Right ventricle myocardium inferior (tissue), 1 donor: ENCODE measurements at regions of chr21 and their contacts with region 1.

Region 1: GRCh38 chr21:45140346-45140940 is 66.1 kb downstream of the ADARB1 start:
- DNase-seq: no peak
- ATAC-seq: peak; percentile 89

Region 2: DNA sequence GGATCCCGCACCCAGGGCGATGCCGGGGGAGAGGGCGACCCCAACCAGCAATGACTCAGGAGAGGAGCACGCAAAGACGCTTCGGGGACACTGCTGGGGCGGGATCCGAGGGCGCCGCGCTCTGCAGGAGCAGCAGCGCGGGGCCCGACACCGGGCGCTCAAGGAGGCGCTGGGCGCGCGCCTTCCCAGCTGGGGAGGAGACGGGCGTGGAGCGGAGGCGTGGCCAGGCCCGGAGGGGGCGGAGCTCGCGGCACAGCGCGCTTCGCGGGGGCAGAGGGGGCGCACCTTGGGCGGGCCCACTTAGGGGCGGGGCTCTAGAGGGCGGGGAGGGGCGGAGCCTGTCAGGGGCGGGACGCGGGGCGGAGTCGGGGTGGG is 322.9 kb before region 1 on chr21:
- intact Hi-C with region 1: loop called (anchors 10 kb)
- DNase-seq: peak; percentile 95
- ATAC-seq: peak; percentile 96

Region 3: DNA sequence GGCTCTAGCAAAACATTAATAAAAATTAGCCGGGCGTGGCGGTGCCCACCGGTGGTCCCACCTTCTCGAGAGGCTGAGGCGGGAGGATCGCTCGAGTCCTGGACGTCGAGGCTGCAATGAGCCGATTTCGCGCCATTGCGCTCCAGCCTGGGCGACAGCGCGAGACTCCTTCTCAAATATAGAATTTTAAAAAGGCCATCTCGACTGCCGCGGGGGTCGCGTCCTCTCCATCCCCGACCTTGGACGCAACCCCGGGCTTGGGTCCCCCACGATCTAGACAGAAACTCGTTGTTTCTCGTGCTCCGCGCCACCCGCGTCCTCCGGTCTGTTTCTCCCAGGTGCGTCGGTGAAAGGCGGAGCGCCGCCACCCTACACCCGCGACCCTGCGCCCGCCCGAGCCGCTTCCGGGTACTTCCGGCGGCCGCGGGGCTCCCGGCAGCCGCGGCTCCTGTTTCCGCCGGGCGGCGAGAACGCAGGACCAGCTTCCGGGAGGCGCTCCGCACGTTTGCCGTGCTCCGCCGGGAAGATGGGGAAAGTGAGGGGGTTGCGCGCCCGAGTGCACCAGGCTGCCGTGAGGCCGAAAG is 200.8 kb before region 1 on chr21 and contains the start of gene SLX9:
- intact Hi-C with region 1: no loop called
- DNase-seq: peak; percentile 87
- ATAC-seq: peak; percentile 91
- total RNA-seq, gene SLX9: 66.5 TPM

Region 4: GRCh38 chr21:45102391-45102932 is 38.0 kb before region 1 on chr21:
- intact Hi-C with region 1: loop called (anchors 2 kb)
- DNase-seq: no peak
- ATAC-seq: no peak